GM10248 (cell line): ENCODE measurements at regions of chr14 and their contacts with region 1.

Region 1: GRCh38 chr14:24310646-24311604 is at the start of gene LTB4R:
- DNase-seq: peak; percentile 65
- CTCF ChIP-seq: peak; percentile 58

Region 2: GRCh38 chr14:24058260-24058950 is 252.5 kb before region 1 on chr14:
- CTCF ChIA-PET with region 1: interaction called, 19 read pairs
- POLR2A ChIA-PET with region 1: no interaction called
- DNase-seq: peak; percentile 70
- CTCF ChIP-seq: peak; percentile 73

Region 3: DNA sequence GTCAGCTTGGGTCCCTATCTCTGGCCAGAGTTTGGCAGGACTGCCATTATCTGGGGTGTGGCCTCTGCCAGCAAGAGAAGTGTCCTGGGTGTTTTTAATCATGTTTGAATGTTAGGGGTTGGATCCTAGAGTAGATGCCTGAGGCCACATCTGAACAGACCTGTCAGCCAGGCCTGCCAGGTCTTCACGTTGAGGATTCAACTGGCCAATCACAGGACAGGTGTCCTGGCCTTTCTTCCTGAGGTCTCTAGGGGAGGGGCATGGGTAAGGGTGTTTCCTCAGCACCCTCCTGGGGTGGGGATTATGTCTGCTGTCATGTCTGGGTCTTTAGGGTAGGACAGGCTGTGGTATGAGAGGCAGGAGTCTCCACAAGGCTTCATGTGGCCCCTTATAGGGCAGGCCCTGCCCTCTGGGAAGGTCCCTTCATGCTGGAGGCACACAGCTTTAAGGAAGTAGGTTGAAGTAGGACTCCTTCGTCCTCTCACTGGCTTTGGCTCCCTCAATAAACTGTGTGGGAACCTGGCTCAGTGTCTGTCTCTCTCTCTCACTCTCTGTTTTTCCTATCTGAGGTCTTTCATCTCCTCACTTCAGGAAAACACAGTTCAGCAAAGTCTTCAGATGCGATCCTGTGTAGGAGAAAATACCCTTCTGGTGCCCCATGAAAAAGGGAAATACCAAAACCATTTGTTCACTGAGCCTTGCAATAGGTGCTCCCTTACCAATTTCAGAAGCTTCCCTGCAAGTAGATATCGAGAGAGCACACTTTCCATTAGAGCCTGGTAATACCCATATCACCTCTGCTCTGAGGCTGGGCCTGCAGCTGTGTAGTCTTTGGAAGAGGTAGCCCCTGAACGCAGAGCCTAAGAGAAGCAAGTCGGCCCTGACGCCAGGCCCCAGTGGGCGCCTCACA is 187.2 kb before region 1 on chr14:
- CTCF ChIA-PET with region 1: no interaction called
- POLR2A ChIA-PET with region 1: no interaction called
- DNase-seq: peak; percentile 45
- CTCF ChIP-seq: no peak

Region 4: DNA sequence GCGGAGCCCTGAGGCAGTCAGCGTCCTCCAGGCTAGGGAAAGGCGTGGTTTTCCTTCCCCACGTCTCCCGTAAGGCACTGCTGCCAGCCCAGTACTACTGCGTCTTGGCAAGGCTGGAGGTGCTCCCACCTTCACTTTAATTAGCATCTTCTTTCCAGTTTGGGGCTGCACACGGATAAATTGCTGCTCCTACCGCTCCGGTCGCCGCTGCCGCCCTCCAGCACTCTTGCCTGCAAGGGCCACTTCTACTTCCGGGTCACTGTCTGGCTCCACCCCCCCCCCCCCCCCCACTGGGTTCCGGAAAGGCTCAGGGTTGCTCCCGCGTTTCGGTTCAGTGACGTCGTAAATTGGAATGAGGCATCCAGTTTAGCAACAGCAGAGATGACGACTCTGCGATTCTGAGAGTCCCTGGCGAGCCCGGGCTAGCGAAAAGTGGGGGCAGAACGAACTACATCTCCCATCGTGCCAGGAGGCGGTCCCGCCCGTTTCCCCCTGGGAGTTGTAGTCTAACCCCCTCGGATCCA is 78.7 kb before region 1 on chr14 and contains the start of gene NEDD8:
- CTCF ChIA-PET with region 1: interaction called, 46 read pairs
- POLR2A ChIA-PET with region 1: no interaction called
- DNase-seq: peak; percentile 89
- CTCF ChIP-seq: no peak

Region 5: GRCh38 chr14:24251880-24252288 is 59.0 kb before region 1 on chr14:
- CTCF ChIA-PET with region 1: interaction called, 155 read pairs
- POLR2A ChIA-PET with region 1: no interaction called
- DNase-seq: no peak
- CTCF ChIP-seq: no peak

Region 6: GRCh38 chr14:24279301-24280186 is 31.4 kb before region 1 on chr14:
- CTCF ChIA-PET with region 1: interaction called, 15 read pairs
- POLR2A ChIA-PET with region 1: interaction called, 3 read pairs
- DNase-seq: peak; percentile 50
- CTCF ChIP-seq: peak; percentile 11

Region 7: DNA sequence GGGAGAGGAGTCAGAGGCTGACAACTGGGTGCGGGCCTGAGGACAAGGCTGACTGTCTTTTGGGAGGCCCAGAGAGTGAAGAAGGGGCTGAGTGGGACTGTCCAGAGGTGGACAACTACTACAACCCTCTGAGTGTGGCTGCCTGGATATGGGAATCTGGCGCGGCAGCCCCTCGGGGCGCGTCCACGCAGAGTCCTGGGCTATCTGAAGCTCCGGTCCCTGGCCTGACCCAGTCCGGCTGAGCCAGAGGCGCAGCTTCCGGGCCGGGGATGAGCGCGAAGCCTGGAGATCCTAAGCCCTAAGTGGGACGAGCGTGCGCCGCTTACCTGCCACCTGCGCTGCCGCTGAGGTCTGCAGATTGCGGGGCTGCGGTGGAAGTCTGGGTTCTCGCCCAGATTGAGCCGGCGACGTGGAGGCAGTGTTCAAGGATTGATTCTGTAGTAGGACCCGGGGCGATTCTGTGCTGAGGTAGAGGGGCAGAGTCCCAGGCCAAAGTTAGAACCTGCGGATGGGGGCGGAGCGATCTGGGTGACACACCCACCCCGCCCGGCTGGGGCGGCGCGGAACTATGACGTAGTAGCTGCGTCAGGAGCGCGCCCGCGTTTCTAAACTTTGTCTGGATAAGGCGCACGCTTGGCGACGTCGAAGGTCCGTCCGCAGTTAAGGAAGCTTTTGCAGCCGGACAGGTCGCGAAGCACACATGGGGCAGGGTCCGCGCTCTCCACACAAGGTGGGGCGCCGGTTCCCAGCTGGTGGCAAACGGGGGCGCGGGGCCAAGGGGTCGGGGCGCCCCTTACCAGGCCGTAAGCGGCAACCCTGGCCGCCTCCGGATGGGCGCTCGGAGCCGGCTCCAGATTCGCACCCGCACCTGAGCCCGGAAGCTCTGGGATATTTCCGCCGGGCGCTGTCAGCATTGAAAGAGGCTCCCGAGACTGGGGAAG is 11.4 kb before region 1 on chr14 and contains the starts of genes DHRS1 and NOP9:
- CTCF ChIA-PET with region 1: interaction called, 151 read pairs
- POLR2A ChIA-PET with region 1: interaction called, 4 read pairs
- DNase-seq: peak; percentile 96
- CTCF ChIP-seq: no peak

Region 8: DNA sequence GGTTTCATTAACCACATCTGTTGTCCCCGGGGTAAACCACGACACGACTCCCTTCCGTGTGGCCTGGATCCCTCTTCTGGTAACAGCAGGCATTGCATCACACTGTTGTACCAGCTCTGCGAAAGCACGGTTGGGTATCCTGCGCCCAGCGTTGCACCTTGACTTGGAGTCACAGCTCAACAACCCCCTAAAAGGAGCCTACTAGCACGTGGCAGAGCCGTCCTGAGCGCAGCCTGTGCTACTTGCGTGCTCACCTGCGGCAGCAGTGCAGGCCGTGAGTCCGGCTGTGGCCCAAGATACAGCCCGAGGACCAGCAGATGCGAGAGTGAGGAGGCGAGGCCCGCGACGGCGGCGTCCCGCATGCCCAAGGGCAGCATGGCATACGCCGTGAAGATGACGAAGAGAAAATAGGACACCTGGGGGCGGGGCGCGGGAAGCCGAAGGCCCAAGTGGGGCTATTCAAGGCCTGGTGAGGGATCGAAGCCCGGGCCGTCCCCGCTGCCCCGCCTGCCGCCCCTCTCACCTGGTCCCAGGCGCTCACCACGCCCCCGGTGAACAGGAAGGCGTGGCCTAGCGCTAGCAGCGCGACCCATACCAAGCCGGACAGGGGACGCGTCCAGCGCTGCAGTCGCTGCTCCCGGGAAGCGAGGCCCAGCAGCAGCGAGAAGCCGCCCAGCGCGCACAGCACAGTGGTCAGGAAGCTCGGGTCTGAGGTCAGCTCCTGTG is 21.5 kb after region 1 on chr14:
- CTCF ChIA-PET with region 1: interaction called, 72 read pairs
- POLR2A ChIA-PET with region 1: no interaction called
- DNase-seq: peak; percentile 91
- CTCF ChIP-seq: peak; percentile 73